Panc1 (cell line): ENCODE measurements at regions of chr2 and their contacts with region 1.

Region 1: GRCh38 chr2:32806862-32807261 is 139.9 kb upstream of the LTBP1 start:
- DNase-seq: no peak
- ATAC-seq: no peak
- H3K4me3 ChIP-seq: no peak overlapping the region
- H3K27ac ChIP-seq: no peak overlapping the region
- H3K4me1 ChIP-seq: no peaks in the 10 kb centered on the region
- H3K27me3 ChIP-seq: no peaks in the 10 kb centered on the region
- CTCF ChIP-seq: no peak

Region 2: GRCh38 chr2:33529771-33530351 is 723.0 kb after region 1 on chr2:
- CTCF ChIA-PET with region 1: no interaction called
- POLR2A ChIA-PET with region 1: interaction called, 10 read pairs
- in situ Hi-C with region 1: no loop called
- intact Hi-C with region 1: no loop called
- DNase-seq: no peak
- ATAC-seq: 0 out of 2 replicates have a peak, but pooled peaks have one; percentile 38
- H3K4me3 ChIP-seq: no peak overlapping the region
- H3K27ac ChIP-seq: no peak overlapping the region
- H3K4me1 ChIP-seq: no peaks in the 10 kb centered on the region
- H3K27me3 ChIP-seq: no peaks in the 10 kb centered on the region; the same call in 1 of the 2 replicates
- CTCF ChIP-seq: no peak